Heart right ventricle (tissue), 16 donors: ENCODE measurements at regions of chr1 and their contacts with region 1.

Region 1: DNA sequence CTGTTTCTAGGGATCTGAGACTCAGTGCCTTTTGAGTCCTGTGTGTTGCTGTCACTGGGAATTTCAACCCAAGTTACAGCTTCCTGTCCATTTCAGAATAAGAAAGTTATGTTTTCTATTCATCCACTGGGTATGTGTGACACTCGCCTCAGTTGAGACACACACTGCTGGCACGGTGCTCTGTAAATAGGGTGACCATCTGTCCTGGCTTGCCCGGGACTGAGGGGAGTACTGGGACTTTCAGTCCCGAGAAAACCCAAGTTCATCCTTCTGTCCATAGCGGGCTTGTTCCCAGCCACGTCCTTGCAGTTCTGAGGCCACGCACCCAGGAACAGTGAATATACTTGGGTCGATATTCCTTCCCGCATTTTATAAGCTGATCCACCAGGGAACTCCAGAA is 56.3 kb upstream of the DISP3 start:
- DNase-seq: no peak
- ATAC-seq: no peak
- H3K4me3 ChIP-seq: no peak overlapping the region
- H3K27ac ChIP-seq: no peak overlapping the region
- H3K4me1 ChIP-seq: no peaks in the 10 kb centered on the region
- H3K27me3 ChIP-seq: peaks cover 0 to 42% (median 25%) of the 10 kb centered on the region in 7 donors
- CTCF ChIP-seq: no peak

Region 2: DNA sequence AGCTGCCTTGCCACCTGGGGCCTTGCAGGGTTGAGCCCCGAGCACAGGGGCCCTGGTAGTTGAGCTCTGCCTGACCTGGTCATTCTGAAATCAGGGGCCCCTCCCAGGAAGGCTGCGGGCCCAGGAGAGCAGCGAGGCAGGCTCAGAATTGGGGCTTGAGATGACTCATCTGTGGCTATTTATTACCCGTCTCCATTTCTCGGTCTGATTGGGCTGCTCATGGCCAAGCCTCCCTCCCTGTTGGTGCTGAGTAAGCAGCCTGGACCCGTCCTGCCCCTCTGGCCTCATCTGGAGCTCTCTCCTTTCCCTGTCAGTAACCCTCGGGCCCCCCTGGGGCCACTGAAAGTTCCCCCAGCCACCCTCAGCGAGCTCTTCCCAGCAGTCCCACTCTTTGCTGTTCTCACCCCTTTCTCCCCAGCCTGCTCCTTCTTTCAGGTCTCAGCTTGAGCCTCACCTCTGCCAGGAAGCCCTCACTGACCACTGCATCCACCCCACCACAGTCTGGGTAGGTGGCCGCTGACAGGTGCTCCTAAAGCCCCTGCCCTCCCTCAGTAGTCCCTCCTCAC is 629.4 kb after region 1 on chr1:
- intact Hi-C with region 1: loop called in 1 of 10 experiments (anchors 5 kb)
- DNase-seq: peak; percentile 52 to 68
- ATAC-seq: peak; percentile 80 to 96 (median 92)
- H3K4me3 ChIP-seq: no peak overlapping the region
- H3K27ac ChIP-seq: peak overlapping the region in 7 of 10 donors; percentile 32 to 77 (median 65)
- H3K4me1 ChIP-seq: peaks cover 0 to 22% (median 16%) of the 10 kb centered on the region in 9 donors
- H3K27me3 ChIP-seq: no peaks in the 10 kb centered on the region
- CTCF ChIP-seq: no peak